Activated T-helper 1 cell treated with anti-CD3 and anti-CD28 coated beads, Interleukin-12 subunit alpha, Interleukin-12 subunit beta, Interleukin-2, Interleukin-4 antibody, amounts not matched to agents 30 ng/mL and 10 ng/mL and 1 ng/mL, durations not matched to agents 14 hours and 24 hours and 36 hours (primary cell): ENCODE measurements at regions of chr1 and their contacts with region 1.

Region 1: GRCh38 chr1:45303582-45304310 is 22.9 kb upstream of the HPDL start:
- DNase-seq: peak; percentile 87
- H3K4me3 Mint-ChIP-seq: peak overlapping the region; percentile 92
- H3K27ac Mint-ChIP-seq: peak overlapping the region; percentile 93
- H3K4me1 Mint-ChIP-seq: peaks cover 50% of the 10 kb centered on the region
- H3K27me3 Mint-ChIP-seq: no peaks in the 10 kb centered on the region

Region 2: DNA sequence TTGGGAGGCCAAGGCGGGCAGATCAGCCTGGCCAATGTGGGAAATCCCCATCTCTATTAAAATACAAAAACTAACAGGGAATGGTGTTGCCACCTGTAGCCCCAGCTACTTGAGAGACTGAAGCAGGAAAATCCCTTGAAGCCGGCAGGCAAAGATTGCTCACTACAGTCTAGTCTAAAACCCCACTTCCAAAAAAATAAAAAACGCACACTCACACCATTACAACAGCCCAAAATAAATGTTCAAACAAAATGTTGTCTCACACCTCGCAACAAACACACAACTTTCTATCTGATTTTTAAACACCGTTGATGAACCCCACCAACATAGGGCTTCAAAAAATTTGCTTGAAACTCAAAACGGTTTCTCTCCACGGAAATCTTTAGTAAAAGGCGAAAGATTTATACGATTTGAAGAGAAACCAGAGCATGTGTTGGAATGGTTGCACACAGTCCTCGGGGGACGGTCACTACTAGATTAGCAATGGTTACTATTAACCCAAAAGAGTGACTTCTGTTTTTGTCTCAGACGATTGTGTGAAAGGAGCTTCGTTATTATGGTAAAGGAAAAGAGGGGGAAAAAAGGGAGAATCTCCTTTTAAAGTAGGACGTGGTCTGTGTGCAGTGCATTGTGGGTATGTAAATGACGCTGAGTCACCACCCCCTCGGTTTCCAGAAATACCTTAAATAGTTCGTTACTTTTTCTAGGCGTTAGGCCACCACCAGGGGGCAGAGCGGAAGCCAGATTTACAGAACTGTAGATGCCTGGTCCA is 572.8 kb before region 1 on chr1 and contains the start of gene RNU5D-1:
- intact Hi-C with region 1: loop called (anchors 1 kb)
- DNase-seq: peak; percentile 87
- H3K4me3 Mint-ChIP-seq: peak within 1 kb of the TSS; percentile 60
- H3K27ac Mint-ChIP-seq: peak within 1 kb of the TSS; percentile 100
- H3K4me1 Mint-ChIP-seq: peaks cover 35% of the 10 kb centered on the region
- H3K27me3 Mint-ChIP-seq: peaks cover 3% of the 10 kb centered on the region
- total RNA-seq, gene RNU5D-1: not detected in 2 replicates

Region 3: DNA sequence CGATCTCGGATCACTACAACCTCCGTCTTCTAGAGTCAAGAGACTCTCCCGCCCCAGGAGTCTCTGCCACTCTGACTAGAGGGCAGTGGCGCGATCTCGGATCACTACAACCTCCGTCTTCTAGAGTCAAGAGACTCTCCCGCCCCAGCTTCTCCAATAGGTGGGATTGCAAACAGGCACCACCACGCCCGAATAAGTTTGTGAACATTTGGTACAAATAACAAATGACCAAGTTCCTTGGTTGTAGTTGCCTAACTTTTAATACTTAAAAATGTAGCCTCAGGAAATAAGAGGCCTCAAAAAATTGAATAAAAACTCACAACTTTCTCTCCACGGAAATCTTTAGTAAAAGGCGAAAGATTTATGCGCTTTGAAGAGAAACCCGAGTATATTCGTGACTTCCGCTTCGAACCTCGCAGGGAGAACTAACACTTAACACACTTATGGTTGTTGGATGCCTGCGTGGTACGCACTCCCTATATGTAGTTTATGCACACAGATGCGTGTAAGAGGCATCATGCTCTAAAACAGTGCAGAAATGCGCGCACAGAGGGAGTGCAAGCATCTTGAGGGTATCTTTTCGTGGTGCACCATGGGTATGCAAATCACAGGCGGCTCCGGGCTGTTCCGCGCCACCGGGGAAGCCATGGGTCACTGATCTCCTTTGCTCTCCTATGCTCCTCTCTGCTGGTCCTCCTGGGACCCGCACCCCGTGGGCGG is 484.0 kb before region 1 on chr1:
- intact Hi-C with region 1: loop called (anchors 5 kb)
- DNase-seq: peak; percentile 81
- H3K4me3 Mint-ChIP-seq: peak overlapping the region; percentile 87
- H3K27ac Mint-ChIP-seq: peak overlapping the region; percentile 97
- H3K4me1 Mint-ChIP-seq: peaks cover 54% of the 10 kb centered on the region
- H3K27me3 Mint-ChIP-seq: no peaks in the 10 kb centered on the region

Region 4: GRCh38 chr1:44985747-44986359 is 317.9 kb before region 1 on chr1:
- intact Hi-C with region 1: loop called (anchors 1 kb)
- DNase-seq: no peak
- H3K4me3 Mint-ChIP-seq: peak overlapping the region; percentile 100
- H3K27ac Mint-ChIP-seq: peak overlapping the region; percentile 94
- H3K4me1 Mint-ChIP-seq: peaks cover 21% of the 10 kb centered on the region
- H3K27me3 Mint-ChIP-seq: peaks cover 2% of the 10 kb centered on the region

Region 5: DNA sequence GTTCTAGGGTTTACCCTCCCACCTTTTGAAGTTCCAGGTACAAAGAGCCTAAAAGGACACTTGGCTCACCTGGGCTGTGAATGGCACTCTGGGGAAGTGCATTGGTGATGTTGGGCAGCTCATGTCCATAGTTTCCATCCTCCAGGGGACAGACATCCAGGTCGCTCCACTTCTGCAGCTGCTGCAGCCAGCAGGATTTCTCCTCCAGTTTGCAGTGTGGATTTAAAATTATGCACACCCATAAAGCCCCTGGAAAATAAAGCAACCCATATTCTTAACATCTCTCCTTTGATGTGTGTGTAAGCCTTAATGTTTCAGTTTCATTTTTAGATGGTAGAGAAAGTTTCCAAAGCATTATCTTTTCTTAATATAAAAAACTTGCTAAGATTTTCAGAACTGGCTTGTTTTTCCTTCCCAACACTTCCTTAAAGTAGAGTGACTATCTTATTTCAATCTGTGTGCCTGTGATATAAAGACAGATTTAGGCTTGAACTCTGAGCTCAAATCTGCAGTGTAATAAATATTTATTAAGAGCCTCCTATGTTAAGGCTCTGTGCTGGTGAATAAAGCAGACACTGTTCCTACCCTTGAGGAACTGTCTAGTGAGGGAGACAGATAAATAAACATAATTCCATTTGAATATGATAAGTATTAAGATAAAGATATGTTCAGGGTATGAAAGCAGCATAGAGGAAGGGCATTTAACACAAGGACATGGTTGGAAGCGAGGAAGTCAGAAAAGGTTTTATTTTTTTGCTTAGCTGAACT is 252.6 kb before region 1 on chr1:
- intact Hi-C with region 1: loop called (anchors 1 kb)
- DNase-seq: no peak
- H3K4me3 Mint-ChIP-seq: peak overlapping the region; percentile 34
- H3K27ac Mint-ChIP-seq: no peak overlapping the region
- H3K4me1 Mint-ChIP-seq: peaks cover 13% of the 10 kb centered on the region
- H3K27me3 Mint-ChIP-seq: peaks cover 9% of the 10 kb centered on the region

Region 6: GRCh38 chr1:45258059-45258650 is 45.6 kb before region 1 on chr1:
- intact Hi-C with region 1: no loop called
- DNase-seq: no peak
- H3K4me3 Mint-ChIP-seq: no peak overlapping the region
- H3K27ac Mint-ChIP-seq: no peak overlapping the region
- H3K4me1 Mint-ChIP-seq: no peaks in the 10 kb centered on the region
- H3K27me3 Mint-ChIP-seq: peaks cover 2% of the 10 kb centered on the region

Region 7: DNA sequence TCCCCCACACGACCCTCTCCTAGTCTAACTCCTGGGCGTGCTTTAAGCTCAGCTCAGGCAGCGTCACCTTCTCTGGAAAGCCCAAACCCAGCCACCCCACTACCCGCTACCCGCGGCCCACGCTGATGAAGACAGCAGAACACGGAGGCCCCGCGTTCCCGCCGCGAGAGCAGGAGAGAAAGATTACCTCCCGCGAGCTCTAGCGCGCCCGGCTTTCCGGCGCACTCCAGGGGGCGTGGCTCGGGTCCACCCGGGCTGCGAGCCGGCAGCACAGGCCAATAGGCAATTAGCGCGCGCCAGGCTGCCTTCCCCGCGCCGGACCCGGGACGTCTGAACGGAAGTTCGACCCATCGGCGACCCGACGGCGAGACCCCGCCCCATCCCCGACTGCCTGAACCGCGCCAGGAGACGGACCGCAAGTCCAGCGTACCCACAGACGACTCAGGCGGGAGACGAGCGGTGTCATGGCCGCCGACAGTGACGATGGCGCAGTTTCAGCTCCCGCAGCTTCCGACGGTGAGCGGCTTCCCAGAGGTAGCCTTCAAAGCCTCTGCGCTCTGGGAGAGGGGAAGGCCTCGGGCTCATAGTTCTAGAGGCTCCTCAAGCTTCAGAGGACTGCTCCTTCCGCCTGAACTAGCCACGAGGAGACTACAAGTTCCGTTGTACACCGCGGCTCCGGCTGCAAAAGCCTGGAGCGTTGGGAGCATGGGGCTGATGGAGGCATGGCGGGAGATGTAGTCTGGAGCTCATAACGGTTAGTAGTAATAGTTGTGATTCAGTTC is 36.2 kb after region 1 on chr1 and contains the starts of genes MUTYH and TOE1:
- intact Hi-C with region 1: loop called (anchors 1 kb)
- DNase-seq: peak; percentile 94
- H3K4me3 Mint-ChIP-seq: peak within 1 kb of the TSS; percentile 99
- H3K27ac Mint-ChIP-seq: peak within 1 kb of the TSS; percentile 100
- H3K4me1 Mint-ChIP-seq: peaks cover 39% of the 10 kb centered on the region
- H3K27me3 Mint-ChIP-seq: no peaks in the 10 kb centered on the region
- total RNA-seq, gene MUTYH: 53.4 and 55.9 TPM in 2 replicates
- total RNA-seq, gene TOE1: 39.1 and 41.4 TPM in 2 replicates

Region 8: GRCh38 chr1:45359882-45360513 is 56.3 kb after region 1 on chr1:
- intact Hi-C with region 1: no loop called
- DNase-seq: peak; percentile 5
- H3K4me3 Mint-ChIP-seq: no peak overlapping the region
- H3K27ac Mint-ChIP-seq: no peak overlapping the region
- H3K4me1 Mint-ChIP-seq: peaks cover 5% of the 10 kb centered on the region
- H3K27me3 Mint-ChIP-seq: peaks cover 2% of the 10 kb centered on the region